Ascending aorta (tissue), 2 donors: ENCODE measurements at regions of chr2 and their contacts with region 1.

Region 1: GRCh38 chr2:27756544-27757498 is 14.7 kb upstream of the MRPL33 start:
- DNase-seq: peak; percentile 35 to 78
- H3K4me3 ChIP-seq: no peak overlapping the region
- H3K27ac ChIP-seq: peak overlapping the region; percentile 55 to 67
- H3K4me1 ChIP-seq: peaks cover 0 to 10% of the 10 kb centered on the region in 2 donors
- H3K27me3 ChIP-seq: no peaks in the 10 kb centered on the region
- CTCF ChIP-seq: no peak

Region 2: GRCh38 chr2:26933431-26934334 is 823.1 kb before region 1 on chr2:
- intact Hi-C with region 1: no loop called
- DNase-seq: no peak
- H3K4me3 ChIP-seq: no peak overlapping the region
- H3K27ac ChIP-seq: no peak overlapping the region
- H3K4me1 ChIP-seq: no peaks in the 10 kb centered on the region
- H3K27me3 ChIP-seq: no peaks in the 10 kb centered on the region
- CTCF ChIP-seq: no peak

Region 3: DNA sequence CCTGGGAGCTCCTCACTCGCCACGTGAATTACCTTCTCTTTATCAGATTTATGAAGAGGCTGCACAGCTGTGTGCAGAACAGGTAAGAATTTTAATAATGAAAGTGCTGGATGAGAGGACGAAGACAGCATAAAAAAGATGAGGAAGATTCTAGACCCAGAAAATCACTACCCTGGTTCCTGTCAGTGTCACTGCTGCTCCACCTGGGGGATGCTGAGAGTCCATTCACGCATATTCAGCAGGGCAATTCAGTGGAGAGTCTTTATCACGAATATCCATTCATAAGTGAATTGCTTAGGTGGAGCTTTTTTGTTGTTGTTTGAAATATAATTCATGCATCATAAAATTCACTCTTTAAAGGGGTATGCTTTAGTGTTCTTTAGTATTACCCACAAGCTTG is 66.7 kb after region 1 on chr2:
- intact Hi-C with region 1: loop called (anchors 5 kb)
- DNase-seq: no peak
- H3K4me3 ChIP-seq: peak overlapping the region in 1 of 2 donors; percentile 54
- H3K27ac ChIP-seq: peak overlapping the region; percentile 0 to 40
- H3K4me1 ChIP-seq: peaks cover 0 to 8% of the 10 kb centered on the region in 2 donors
- H3K27me3 ChIP-seq: no peaks in the 10 kb centered on the region
- CTCF ChIP-seq: peak; percentile 35 to 61 (median 44)

Region 4: DNA sequence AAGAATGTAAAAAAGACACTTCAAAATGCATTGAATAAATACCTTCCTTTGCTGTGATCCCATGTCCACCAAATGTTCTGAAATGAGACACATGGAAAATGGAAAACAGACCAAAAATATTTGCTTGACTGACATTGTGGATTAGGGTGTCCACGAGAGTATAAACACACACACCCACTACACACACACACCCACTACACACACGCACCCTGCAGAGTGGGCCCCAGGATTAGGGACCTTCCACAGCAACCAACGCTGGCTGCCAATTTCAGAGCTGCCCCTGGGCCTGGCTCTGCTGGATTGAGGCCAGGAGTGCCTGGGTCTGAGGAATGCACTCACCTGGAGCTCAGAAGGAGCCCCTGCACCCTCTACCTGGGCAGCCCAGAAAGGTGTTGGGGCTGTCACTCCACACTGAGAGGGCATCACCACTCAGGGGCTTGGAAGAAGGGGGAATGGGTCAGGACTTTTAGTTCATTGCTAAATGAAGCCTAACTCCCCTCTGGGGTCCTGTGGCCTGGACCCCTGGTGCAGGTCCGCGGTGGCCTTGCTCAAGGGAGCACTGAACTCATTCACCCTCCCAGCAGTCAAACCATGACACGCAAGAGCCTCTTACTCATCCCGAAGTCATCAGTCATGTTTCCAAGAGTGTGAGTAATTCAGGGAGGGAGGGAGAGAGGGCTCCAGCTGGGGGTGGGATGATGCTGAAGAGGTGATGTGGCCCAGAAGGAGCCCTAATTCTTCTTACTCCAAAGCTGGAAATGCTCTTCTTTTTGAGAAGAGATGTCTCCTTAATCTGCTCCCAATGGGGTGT is 688.8 kb after region 1 on chr2:
- intact Hi-C with region 1: loop called (anchors 5 kb)
- DNase-seq: no peak
- H3K4me3 ChIP-seq: no peak overlapping the region
- H3K27ac ChIP-seq: no peak overlapping the region
- H3K4me1 ChIP-seq: no peaks in the 10 kb centered on the region
- H3K27me3 ChIP-seq: no peaks in the 10 kb centered on the region
- CTCF ChIP-seq: no peak